ENCODE measurements at regions of chr1 and their contacts with region 1.

Region 1: GRCh38 chr1:223712194-223712849 is at the start of gene CAPN2:
- H3K4me3 ChIP-seq: peak within 1 kb of the TSS; percentile 86
- H3K27ac ChIP-seq: peak within 1 kb of the TSS; percentile 95
- H3K4me1 ChIP-seq: peaks cover 46% of the 10 kb centered on the region
- CTCF ChIP-seq: peak; percentile 41; the same call in 1 of the 2 replicates

Region 2: GRCh38 chr1:223695941-223696340 is 16.4 kb before region 1 on chr1:
- CTCF ChIA-PET with region 1: interaction called, 19 read pairs
- POLR2A ChIA-PET with region 1: interaction called, 5 read pairs
- H3K4me3 ChIP-seq: no peak overlapping the region
- H3K27ac ChIP-seq: no peak overlapping the region
- H3K4me1 ChIP-seq: peaks cover 3% of the 10 kb centered on the region
- CTCF ChIP-seq: no peak

Region 3: DNA sequence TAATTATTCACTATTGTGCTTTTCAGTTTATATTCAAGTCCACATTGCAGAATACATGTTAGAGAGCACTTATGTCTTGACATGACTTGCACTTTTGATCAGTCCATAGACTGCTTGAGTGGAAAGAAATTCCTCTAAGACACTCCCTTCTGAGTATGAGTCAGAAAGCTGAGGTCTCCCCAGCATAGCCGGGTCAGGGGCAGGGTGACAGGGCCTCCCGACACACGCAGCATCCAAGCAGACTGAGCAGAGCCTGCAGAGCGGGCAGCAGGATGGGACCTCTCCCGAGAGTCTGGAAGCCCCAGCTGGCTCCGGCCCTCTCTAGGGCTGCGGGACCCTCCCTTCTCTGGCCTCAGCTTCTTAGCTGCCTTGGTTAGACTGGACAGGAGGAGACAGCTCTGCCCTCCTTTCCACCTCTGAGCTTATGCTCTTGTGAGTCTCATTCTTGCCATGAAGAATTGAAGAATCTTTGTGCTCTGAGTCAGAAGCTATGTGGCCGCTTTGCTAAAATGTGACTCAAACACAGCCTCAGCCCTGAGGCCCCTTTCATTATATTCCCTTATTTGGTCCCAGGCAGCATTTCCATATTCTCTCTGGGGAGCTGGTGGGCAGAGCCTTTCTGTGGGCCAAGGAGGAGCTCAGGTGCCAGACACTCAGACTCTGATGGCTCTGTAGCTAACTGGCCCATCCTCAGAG is 11.2 kb before region 1 on chr1:
- CTCF ChIA-PET with region 1: interaction called, 19 read pairs
- POLR2A ChIA-PET with region 1: interaction called, 15 read pairs
- H3K4me3 ChIP-seq: no peak overlapping the region
- H3K27ac ChIP-seq: peak overlapping the region; percentile 38; the same call in 1 of the 2 replicates
- H3K4me1 ChIP-seq: peaks cover 15% of the 10 kb centered on the region
- CTCF ChIP-seq: no peak

Region 4: DNA sequence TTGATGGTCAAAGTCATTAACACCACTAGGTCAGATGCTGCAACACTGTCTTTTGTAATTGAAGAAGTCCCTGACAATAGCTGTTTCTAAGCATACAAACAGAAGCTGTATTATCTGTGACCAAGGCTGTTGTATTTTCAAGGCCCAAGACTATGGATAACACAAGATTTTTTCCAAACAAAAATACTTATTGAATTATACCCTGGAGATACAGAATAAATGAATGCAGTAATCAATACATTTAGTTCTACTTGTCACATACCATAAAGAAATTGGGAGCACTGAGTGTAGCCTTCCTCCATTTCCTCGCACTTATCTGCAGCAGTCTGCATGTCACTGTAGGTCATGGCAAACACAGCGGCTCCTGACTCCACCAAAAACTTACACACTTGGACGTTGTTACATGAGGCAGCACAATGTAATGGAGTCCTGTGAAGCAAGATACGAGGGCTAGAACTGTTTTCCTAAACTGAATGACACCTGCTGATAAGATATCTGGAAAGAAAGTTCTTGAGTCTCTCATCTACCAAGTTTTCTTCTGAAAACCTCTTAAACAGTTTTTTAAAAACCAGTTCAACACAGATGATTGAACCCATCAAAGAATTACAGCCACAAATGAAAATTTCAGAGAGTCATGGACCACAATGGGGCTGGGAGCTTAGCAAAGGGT is 76.6 kb after region 1 on chr1:
- CTCF ChIA-PET with region 1: no interaction called
- POLR2A ChIA-PET with region 1: no interaction called
- H3K4me3 ChIP-seq: no peak overlapping the region
- H3K27ac ChIP-seq: no peak overlapping the region
- H3K4me1 ChIP-seq: no peaks in the 10 kb centered on the region
- CTCF ChIP-seq: no peak